Left ventricle myocardium inferior (tissue), 1 donor: ENCODE measurements at regions of chr2 and their contacts with region 1.

Region 1: DNA sequence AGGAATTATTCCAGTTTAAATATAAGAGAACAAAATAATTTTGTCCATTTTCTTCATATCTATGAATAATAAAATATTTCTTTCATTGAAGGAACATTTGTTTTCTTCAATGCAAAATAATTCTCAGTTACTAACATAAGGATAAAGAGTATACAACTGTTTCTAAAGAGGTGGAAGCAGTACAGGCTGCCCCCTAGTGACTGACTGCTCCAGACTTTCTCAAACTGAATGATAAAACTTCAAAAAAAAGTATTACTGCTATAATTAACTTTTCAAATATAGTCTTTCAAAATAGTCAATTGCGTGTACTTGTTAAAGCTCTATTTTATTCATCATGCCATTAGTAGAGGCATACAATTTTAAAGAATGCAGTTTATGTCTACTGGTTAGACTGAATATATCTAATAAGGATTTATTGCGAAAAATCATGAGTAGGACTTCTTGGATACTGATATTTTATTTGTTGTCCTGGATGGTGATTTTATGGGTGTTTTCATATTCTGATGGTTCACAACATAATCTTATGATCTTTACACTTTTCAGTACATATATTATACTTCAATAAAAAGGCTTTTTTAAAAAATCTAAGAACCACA is 100.1 kb downstream of the WDPCP start:
- DNase-seq: no peak
- H3K4me3 ChIP-seq: no peak overlapping the region
- H3K27ac ChIP-seq: no peak overlapping the region
- H3K4me1 ChIP-seq: no peaks in the 10 kb centered on the region
- H3K27me3 ChIP-seq: no peaks in the 10 kb centered on the region
- CTCF ChIP-seq: peak; percentile 74

Region 2: GRCh38 chr2:62787386-62787785 is 700.8 kb before region 1 on chr2:
- intact Hi-C with region 1: loop called (anchors 10 kb)
- DNase-seq: no peak
- H3K4me3 ChIP-seq: no peak overlapping the region
- H3K27ac ChIP-seq: no peak overlapping the region
- H3K4me1 ChIP-seq: peaks cover 14% of the 10 kb centered on the region
- H3K27me3 ChIP-seq: no peaks in the 10 kb centered on the region
- CTCF ChIP-seq: peak; percentile 61

Region 3: GRCh38 chr2:63628403-63628942 is 140.3 kb after region 1 on chr2:
- intact Hi-C with region 1: no loop called
- DNase-seq: no peak
- H3K4me3 ChIP-seq: no peak overlapping the region
- H3K27ac ChIP-seq: no peak overlapping the region
- H3K4me1 ChIP-seq: no peaks in the 10 kb centered on the region
- H3K27me3 ChIP-seq: no peaks in the 10 kb centered on the region
- CTCF ChIP-seq: no peak